HEK293 (cell line): ENCODE measurements at regions of chr2 and their contacts with region 1.

Region 1: DNA sequence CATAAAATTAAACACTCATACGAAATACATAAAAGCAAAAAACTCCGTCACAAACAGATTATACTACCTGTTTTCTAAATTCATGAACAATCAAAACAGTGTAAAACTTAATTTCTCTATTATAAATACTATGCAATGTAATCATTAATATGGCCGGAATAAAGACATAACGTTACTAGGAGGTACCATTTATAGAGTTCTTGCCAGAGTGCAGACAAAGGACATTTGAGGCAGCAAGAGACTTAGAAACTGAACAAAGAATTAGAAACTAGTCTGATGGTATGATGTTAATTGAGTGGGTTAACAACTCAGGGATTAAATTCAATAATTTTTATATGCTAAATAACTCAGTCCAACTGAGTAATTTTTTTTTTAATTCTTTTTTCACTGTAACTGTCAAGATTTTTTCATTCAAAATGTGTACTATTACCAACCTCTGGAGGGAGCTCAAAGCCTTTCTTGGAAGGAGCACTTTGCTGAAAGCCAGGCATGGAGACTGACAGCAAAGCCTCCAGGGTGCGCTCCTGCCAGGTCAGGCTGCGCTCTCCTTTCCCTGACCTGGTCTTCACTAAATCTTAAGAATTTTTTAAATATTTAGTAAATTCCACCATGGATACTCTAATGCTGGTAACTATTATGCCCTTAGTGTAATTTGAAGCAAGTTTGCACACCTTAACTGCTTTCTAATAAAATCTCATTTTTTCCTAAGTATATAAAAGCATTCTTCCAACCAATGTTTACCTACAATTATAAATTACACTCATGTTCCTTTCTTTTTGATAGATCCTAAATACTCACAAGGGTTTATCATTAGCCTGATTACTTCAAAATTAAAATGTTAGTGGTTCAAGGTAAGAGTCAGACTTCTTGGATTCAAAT is 34.1 kb downstream of the WDR35 start:
- H3K4me3 ChIP-seq: no peak overlapping the region
- H3K27ac ChIP-seq: no peak overlapping the region
- H3K4me1 ChIP-seq: no peaks in the 10 kb centered on the region
- CTCF ChIP-seq: peak; percentile 75

Region 2: GRCh38 chr2:19916385-19916950 is 39.3 kb before region 1 on chr2:
- CTCF ChIA-PET with region 1: no interaction called
- POLR2A ChIA-PET with region 1: no interaction called
- H3K4me3 ChIP-seq: no peak overlapping the region
- H3K27ac ChIP-seq: no peak overlapping the region
- H3K4me1 ChIP-seq: 0 out of 2 replicates have a peak, but pooled peaks cover 2% of the 10 kb centered on the region
- CTCF ChIP-seq: no peak

Region 3: GRCh38 chr2:19944205-19944845 is 11.5 kb before region 1 on chr2:
- CTCF ChIA-PET with region 1: interaction called, 13 read pairs
- POLR2A ChIA-PET with region 1: no interaction called
- H3K4me3 ChIP-seq: no peak overlapping the region
- H3K27ac ChIP-seq: no peak overlapping the region
- H3K4me1 ChIP-seq: 0 out of 2 replicates have a peak, but pooled peaks cover 3% of the 10 kb centered on the region
- CTCF ChIP-seq: no peak

Region 4: GRCh38 chr2:20005891-20006470 is 50.2 kb after region 1 on chr2:
- CTCF ChIA-PET with region 1: no interaction called
- POLR2A ChIA-PET with region 1: no interaction called
- H3K4me3 ChIP-seq: no peak overlapping the region
- H3K27ac ChIP-seq: no peak overlapping the region
- H3K4me1 ChIP-seq: no peaks in the 10 kb centered on the region
- CTCF ChIP-seq: no peak

Region 5: GRCh38 chr2:20097879-20098714 is 142.3 kb after region 1 on chr2:
- CTCF ChIA-PET with region 1: interaction called, 29 read pairs
- POLR2A ChIA-PET with region 1: no interaction called
- H3K4me3 ChIP-seq: no peak overlapping the region
- H3K27ac ChIP-seq: no peak overlapping the region
- H3K4me1 ChIP-seq: 0 out of 2 replicates have a peak, but pooled peaks cover 2% of the 10 kb centered on the region
- CTCF ChIP-seq: peak; percentile 85